PC-3 (cell line): ENCODE measurements at regions of chr10 and their contacts with region 1.

Region 1: GRCh38 chr10:104209575-104210198 is 22.5 kb downstream of the CFAP43 start:
- DNase-seq: peak; percentile 55
- ATAC-seq: peak; percentile 49; the same call in 1 of the 2 replicates
- H3K4me3 ChIP-seq: no peak overlapping the region
- H3K27ac ChIP-seq: no peak overlapping the region
- H3K4me1 ChIP-seq: no peaks in the 10 kb centered on the region
- H3K27me3 ChIP-seq: no peaks in the 10 kb centered on the region
- CTCF ChIP-seq: peak; percentile 66

Region 2: DNA sequence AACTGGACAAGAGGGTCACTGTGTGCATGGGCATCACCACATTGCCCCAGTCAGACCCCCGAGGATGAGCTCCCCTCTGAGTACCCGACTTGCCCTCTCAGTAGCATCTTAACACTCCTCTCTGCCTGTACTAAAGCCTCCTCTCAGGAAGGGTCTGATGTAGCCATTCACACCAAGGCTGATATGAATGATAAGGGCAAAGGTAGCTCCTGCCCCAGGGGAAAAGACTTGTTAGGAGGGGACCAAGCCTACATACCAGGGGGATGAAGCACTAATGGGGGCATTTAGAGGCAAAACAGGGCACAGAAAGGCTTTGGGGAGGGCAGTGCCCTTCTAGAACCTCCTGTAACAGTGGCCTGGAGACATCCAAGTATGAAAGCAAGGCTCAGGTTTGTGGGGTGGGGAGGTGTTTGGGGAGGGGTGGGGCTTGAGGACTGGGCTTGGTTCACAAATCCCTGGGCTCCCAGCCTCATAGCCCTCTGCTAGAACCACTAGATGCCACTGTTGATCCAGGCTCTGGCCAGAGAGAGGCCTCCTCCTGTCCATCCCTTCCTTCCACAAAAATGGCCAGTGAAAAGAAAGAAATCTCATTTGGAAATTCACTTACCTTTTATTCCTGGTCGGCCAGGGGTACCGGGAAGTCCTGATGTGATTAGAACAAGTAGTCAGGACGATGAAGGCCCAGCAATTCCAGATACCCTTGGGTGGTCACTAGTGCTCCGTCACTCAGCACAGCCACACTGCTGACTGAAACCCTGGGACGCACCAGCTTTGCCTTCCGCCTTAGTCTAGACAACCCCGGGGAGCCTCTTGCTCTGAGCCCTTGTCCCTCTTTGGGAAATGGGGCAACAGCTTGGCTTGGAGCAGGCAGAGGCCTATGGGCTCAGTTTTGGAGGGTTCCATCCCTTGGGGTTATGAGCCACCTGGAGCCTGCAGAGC is 164.3 kb before region 1 on chr10:
- CTCF ChIA-PET with region 1: no interaction called
- POLR2A ChIA-PET with region 1: no interaction called
- intact Hi-C with region 1: loop called (anchors 1 kb)
- DNase-seq: peak; percentile 80
- ATAC-seq: peak; percentile 87
- H3K4me3 ChIP-seq: no peak overlapping the region
- H3K27ac ChIP-seq: no peak overlapping the region
- H3K4me1 ChIP-seq: peaks cover 18% of the 10 kb centered on the region
- H3K27me3 ChIP-seq: no peaks in the 10 kb centered on the region
- CTCF ChIP-seq: peak; percentile 70

Region 3: DNA sequence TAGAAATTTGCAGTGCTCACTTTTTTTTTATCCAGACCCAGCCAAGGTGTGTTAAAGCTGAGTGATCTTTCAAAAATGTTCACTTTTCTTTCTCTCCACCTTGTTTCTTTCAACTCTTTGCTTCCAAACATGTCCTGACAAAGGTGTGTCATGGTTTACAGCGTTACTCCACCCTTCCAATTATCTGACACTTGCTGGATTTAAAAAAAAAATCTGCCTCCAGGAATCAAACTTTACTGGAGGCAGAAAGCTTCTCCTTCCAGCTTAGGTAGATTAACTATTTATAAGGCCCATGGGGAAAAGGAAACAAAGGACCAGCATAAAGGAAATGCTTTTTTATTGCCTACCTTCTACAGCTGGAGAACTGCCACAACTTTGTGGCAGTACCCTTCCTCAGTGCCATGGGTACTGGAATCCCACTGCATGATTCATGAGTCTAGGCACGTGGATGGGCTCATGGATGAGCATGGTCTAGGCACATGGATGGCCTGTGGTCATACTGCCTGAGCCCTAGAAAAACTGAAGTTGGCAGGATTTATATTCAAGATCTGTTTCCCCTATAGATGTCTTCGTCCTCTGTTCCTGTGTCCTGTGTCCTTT is 123.8 kb before region 1 on chr10 and contains the start of gene COL17A1:
- CTCF ChIA-PET with region 1: no interaction called
- POLR2A ChIA-PET with region 1: no interaction called
- intact Hi-C with region 1: no loop called
- DNase-seq: peak; percentile 18
- ATAC-seq: no peak
- H3K4me3 ChIP-seq: no peak within 1 kb of the TSS
- H3K27ac ChIP-seq: peak within 1 kb of the TSS; percentile 46
- H3K4me1 ChIP-seq: peaks cover 15% of the 10 kb centered on the region
- H3K27me3 ChIP-seq: no peaks in the 10 kb centered on the region
- CTCF ChIP-seq: no peak
- total RNA-seq, gene COL17A1: 1.2 and 1.6 TPM in 2 replicates

Region 4: DNA sequence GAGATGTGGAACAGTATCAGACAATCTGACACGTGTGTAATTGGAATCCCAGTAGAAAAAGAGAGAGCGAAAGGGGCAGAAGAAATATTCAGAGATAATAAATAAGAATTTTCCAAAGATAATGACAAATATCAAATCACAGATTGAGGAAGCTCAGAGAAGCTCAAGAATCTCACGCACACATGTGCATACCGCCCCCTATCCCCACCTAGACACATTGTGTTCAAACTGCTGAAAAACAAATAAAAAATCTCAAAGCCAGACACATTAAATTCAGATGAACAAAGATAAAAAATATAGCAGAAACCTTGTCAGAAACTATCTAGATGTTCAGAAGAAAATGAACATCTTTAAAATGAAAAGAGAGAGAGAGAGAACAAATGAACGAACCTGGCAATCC is 70.5 kb before region 1 on chr10:
- CTCF ChIA-PET with region 1: no interaction called
- POLR2A ChIA-PET with region 1: no interaction called
- intact Hi-C with region 1: loop called (anchors 5 kb)
- DNase-seq: peak; percentile 30
- ATAC-seq: peak; percentile 49; the same call in 1 of the 2 replicates
- H3K4me3 ChIP-seq: no peak overlapping the region
- H3K27ac ChIP-seq: no peak overlapping the region
- H3K4me1 ChIP-seq: no peaks in the 10 kb centered on the region
- H3K27me3 ChIP-seq: no peaks in the 10 kb centered on the region
- CTCF ChIP-seq: peak; percentile 73